Left cardiac atrium (tissue), 4 donors: ENCODE measurements at regions of chr12 and their contacts with region 1.

Region 1: DNA sequence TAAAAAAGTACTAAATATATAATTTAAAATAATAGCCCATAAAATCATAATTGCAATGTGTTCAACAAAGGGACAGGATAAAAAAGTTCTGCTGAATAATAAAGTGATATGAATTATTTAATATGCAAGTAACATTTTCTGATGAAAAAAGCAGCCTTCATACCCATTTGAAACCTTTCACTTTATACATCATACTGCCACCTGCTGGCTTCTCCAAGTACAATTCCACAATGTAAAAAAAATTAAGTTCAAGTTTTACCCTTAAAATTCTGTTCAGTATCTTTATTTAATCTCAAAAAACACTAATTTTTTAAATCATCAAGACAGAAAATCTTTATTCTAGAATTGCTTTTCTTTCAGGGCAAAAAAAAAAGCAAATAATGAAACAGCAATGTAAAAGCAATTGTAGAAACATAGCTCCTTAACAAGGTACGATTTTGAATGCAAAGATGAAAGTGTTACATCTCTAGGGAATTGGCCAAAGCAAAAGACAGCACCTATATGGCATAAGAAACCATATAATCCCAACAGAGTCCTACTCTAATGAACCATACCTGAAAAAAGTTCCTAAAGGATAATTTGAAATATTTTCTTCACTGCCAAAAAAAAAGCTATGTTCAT is 15.0 kb downstream of the MDM1 start:
- DNase-seq: peak; percentile 31
- ATAC-seq: no peak

Region 2: GRCh38 chr12:68040450-68041075 is 276.6 kb before region 1 on chr12:
- intact Hi-C with region 1: loop called in 1 of 2 experiments (anchors 5 kb)
- DNase-seq: peak; percentile 48
- ATAC-seq: peak; percentile 81 to 87

Region 3: DNA sequence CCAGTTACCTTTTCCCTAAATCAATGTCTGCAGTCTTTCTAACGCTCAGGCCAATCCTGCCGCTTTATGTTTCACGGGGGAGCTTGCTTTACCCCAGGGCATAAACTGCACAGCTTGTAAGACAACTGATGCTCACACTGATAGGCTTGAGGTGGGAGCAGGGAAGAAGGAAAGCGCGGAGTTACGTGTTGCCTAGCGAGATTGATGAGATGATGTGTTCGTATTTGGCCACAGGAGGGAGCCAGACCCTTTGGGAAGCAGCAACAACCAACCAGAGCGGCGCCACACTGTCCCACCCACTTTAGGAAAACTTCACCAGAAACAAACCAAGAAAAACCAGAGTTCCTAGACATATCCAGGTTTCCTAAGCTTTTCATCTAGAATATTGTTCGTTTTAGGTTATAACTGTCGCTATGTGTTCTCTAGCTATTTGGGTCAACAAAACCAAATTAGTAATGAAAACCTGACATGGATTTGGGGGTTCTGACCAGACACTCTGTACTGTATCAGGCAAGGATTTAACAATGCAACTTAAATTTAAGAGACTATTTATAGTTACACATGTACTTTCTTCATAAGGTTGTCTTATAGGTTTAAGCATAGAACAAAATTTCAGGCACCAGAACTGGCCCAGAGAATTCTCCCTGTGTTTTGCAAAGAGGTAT is 93.9 kb before region 1 on chr12:
- intact Hi-C with region 1: loop called (anchors 1 to 5 kb)
- DNase-seq: peak; percentile 84
- ATAC-seq: peak; percentile 98